AG04450 (cell line): ENCODE measurements at regions of chr1 and their contacts with region 1.

Region 1: GRCh38 chr1:208093754-208094719 is 150.1 kb downstream of the PLXNA2 start:
- DNase-seq: no peak
- H3K4me3 ChIP-seq: no peak overlapping the region
- H3K27ac ChIP-seq: no peak overlapping the region
- H3K27me3 ChIP-seq: no peaks in the 10 kb centered on the region
- CTCF ChIP-seq: peak; percentile 77

Region 2: DNA sequence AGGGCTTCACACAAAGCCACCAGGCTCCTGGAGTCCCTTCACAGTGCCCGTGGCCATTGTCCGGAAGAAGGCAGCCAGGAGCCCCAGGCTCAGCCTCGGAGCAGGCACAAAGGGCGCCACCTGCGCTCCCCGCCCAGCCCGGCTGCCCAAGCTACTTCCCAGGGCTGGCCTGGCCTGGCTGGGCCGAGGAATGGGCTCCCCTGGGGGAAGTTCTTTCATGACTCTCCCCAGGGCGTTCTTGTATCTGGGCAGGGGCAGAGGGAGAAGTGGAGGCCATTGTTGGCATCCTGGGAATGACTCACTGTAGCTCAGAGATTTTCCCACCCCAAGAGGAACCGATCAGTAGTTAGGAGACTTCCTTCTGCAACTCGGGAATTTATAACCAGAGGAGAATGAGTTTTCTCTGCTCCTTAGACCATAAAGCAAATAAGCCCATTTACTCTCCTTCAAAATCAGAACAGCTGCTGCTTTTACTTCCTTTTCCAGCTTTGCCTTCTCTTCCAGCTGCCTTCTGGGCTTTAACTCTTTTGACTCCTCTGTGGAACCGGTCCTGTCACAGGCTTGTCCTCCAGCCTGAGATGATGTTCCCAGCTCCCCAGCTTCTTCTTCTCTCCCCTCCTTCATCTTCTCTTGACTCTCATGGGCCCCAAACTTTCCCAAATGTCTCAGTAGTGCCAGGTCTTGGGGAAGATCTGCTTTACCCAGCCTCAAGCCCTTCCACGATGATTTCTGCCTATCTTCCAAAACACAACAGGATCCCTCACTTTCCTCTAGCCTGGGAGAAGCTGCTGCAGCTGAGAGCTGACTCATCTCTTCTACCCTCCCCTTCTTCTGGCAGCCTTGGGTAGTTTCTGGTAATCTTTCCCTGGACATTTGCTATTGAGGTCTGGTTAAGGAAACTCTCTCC is 64.4 kb before region 1 on chr1:
- CTCF ChIA-PET with region 1: interaction called, 11 read pairs
- POLR2A ChIA-PET with region 1: no interaction called
- DNase-seq: peak; percentile 33
- H3K4me3 ChIP-seq: no peak overlapping the region; the same call in 1 of the 2 replicates
- H3K27ac ChIP-seq: peak overlapping the region; percentile 73
- H3K27me3 ChIP-seq: no peaks in the 10 kb centered on the region
- CTCF ChIP-seq: no peak

Region 3: DNA sequence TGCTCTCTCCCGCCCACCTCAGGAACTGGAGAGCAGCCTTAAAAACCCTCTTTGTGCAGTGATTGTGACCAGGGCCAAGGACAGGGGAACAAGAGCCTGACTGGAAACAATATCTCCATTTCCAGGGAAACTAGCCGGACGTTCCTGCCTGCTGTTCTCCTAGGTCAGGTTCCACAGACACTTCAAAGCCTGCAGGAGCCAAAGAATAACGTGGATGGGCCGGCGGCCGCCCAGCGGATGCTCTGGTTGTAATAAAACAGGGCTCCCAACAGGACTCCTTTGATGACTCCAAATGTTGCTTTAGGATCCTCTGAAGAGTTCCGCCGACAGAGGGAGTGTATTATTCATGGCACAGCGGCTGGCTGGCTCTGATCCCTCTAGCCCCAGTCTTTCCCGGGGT is 12.1 kb before region 1 on chr1:
- CTCF ChIA-PET with region 1: interaction called, 15 read pairs
- POLR2A ChIA-PET with region 1: no interaction called
- DNase-seq: no peak
- H3K4me3 ChIP-seq: no peak overlapping the region
- H3K27ac ChIP-seq: no peak overlapping the region
- H3K27me3 ChIP-seq: no peaks in the 10 kb centered on the region
- CTCF ChIP-seq: peak; percentile 20; the same call in 1 of the 2 replicates